PC-3 (cell line): ENCODE measurements at regions of chr3 and their contacts with region 1.

Region 1: GRCh38 chr3:3165241-3165640 is 14.2 kb downstream of the CRBN start:
- DNase-seq: no peak
- ATAC-seq: no peak
- H3K4me3 ChIP-seq: no peak overlapping the region
- H3K27ac ChIP-seq: no peak overlapping the region
- H3K4me1 ChIP-seq: no peaks in the 10 kb centered on the region
- H3K27me3 ChIP-seq: no peaks in the 10 kb centered on the region
- CTCF ChIP-seq: no peak

Region 2: DNA sequence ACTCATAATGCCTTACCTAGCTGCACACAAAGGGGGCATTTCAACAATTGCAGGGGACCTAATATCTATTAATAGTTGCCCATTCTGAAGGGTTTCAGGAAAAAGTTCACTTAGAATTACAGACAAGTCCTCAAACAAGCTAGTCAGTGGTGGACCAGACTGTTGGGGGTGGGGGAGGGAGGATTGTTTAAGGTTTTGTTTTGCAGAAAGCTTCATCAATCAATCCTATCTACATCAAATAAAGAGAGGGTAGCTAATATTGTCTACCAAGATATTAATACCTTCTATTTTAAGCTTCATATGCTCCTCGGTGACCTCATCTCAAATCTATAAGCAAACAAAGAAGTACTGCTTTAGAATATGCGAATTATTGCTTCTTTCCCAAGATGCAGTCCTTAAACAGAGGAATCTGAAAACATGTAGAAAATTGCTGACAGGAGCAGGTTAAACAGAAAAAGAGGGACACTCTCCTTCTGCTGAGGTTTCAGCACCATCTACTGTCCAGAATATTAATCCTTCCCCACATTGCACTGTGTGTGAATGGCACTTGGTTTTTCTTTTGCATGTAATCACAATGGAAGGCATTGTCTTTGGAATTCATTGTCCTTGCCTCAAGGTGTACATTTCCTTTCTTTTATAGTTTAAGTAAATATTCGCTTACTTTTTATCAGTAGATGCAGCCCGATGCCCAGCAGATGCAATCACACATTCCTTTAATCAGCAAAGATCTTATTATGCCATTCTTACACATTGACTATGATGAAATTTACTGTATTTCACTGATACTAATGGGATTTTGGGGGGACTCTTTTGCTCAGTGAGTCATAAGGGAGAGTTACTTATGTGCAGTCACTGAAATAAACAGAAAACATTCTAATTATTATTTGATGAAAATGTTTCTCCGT is 149.8 kb before region 1 on chr3:
- CTCF ChIA-PET with region 1: no interaction called
- POLR2A ChIA-PET with region 1: no interaction called
- intact Hi-C with region 1: loop called (anchors 5 kb)
- DNase-seq: peak; percentile 52
- ATAC-seq: peak; percentile 89
- H3K4me3 ChIP-seq: no peak overlapping the region
- H3K27ac ChIP-seq: no peak overlapping the region
- H3K4me1 ChIP-seq: no peaks in the 10 kb centered on the region
- H3K27me3 ChIP-seq: peaks cover 14% of the 10 kb centered on the region; the same call in 1 of the 2 replicates
- CTCF ChIP-seq: peak; percentile 54

Region 3: GRCh38 chr3:3316521-3316920 is 151.3 kb after region 1 on chr3:
- CTCF ChIA-PET with region 1: no interaction called
- POLR2A ChIA-PET with region 1: no interaction called
- intact Hi-C with region 1: no loop called
- DNase-seq: no peak
- ATAC-seq: no peak
- H3K4me3 ChIP-seq: no peak overlapping the region
- H3K27ac ChIP-seq: no peak overlapping the region
- H3K4me1 ChIP-seq: no peaks in the 10 kb centered on the region
- H3K27me3 ChIP-seq: no peaks in the 10 kb centered on the region
- CTCF ChIP-seq: no peak

Region 4: GRCh38 chr3:3509665-3510280 is 344.5 kb after region 1 on chr3:
- CTCF ChIA-PET with region 1: no interaction called
- POLR2A ChIA-PET with region 1: no interaction called
- intact Hi-C with region 1: no loop called
- DNase-seq: no peak
- ATAC-seq: no peak
- H3K4me3 ChIP-seq: no peak overlapping the region
- H3K27ac ChIP-seq: no peak overlapping the region
- H3K4me1 ChIP-seq: no peaks in the 10 kb centered on the region
- H3K27me3 ChIP-seq: no peaks in the 10 kb centered on the region
- CTCF ChIP-seq: no peak